Activated T-helper 2 cell treated with anti-CD3 and anti-CD28 coated beads, Interferon-gamma antibody, Interleukin-2, Interleukin-4, amounts not matched to agents 10 μg/mL and 5 μg/mL and 100 μg/mL, durations not matched to agents 14 hours and 24 hours and 36 hours (primary cell): ENCODE measurements at regions of chr1 and their contacts with region 1.

Region 1: GRCh38 chr1:227437495-227438008 is 119.3 kb upstream of the CDC42BPA start:
- DNase-seq: no peak
- H3K4me3 Mint-ChIP-seq: no peak overlapping the region
- H3K27ac Mint-ChIP-seq: no peak overlapping the region
- H3K4me1 Mint-ChIP-seq: peaks cover under 1% of the 10 kb centered on the region
- H3K27me3 Mint-ChIP-seq: peaks cover 17% of the 10 kb centered on the region

Region 2: DNA sequence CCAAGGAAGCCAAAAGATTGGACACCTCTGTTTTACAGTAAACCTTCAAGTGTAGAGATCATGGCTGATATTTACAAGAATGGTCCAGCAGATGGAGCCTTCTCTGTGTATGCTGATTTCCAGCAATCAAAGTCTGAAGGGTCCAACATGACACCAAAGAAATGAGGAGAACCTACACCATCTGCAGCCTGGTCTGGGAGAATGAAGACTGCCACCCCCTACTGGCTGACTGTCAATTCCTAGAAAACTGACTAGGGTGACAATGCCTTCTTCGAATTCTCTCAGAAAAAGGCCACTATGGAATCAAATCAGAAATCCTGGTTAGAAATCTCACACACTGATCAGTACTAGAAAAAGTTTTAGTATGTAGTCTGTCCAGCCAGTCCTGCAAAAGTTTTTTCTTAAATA is 202.6 kb before region 1 on chr1:
- intact Hi-C with region 1: loop called (anchors 5 kb)
- DNase-seq: no peak
- H3K4me3 Mint-ChIP-seq: no peak overlapping the region
- H3K27ac Mint-ChIP-seq: no peak overlapping the region
- H3K4me1 Mint-ChIP-seq: peaks cover 4% of the 10 kb centered on the region
- H3K27me3 Mint-ChIP-seq: peaks cover 6% of the 10 kb centered on the region

Region 3: GRCh38 chr1:227318003-227318852 is 119.3 kb before region 1 on chr1 and contains the start of gene CDC42BPA:
- intact Hi-C with region 1: loop called (anchors 10 kb)
- DNase-seq: peak; percentile 23
- H3K4me3 Mint-ChIP-seq: peak within 1 kb of the TSS; percentile 83
- H3K27ac Mint-ChIP-seq: peak within 1 kb of the TSS; percentile 33
- H3K4me1 Mint-ChIP-seq: peaks cover 24% of the 10 kb centered on the region
- H3K27me3 Mint-ChIP-seq: peaks cover 59% of the 10 kb centered on the region
- total RNA-seq, gene CDC42BPA: 6.6 and 7.1 TPM in 2 replicates

Region 4: GRCh38 chr1:227396539-227397353 is 40.8 kb before region 1 on chr1:
- intact Hi-C with region 1: loop called (anchors 2 kb)
- DNase-seq: no peak
- H3K4me3 Mint-ChIP-seq: no peak overlapping the region
- H3K27ac Mint-ChIP-seq: no peak overlapping the region
- H3K4me1 Mint-ChIP-seq: peaks cover 13% of the 10 kb centered on the region
- H3K27me3 Mint-ChIP-seq: no peaks in the 10 kb centered on the region

Region 5: DNA sequence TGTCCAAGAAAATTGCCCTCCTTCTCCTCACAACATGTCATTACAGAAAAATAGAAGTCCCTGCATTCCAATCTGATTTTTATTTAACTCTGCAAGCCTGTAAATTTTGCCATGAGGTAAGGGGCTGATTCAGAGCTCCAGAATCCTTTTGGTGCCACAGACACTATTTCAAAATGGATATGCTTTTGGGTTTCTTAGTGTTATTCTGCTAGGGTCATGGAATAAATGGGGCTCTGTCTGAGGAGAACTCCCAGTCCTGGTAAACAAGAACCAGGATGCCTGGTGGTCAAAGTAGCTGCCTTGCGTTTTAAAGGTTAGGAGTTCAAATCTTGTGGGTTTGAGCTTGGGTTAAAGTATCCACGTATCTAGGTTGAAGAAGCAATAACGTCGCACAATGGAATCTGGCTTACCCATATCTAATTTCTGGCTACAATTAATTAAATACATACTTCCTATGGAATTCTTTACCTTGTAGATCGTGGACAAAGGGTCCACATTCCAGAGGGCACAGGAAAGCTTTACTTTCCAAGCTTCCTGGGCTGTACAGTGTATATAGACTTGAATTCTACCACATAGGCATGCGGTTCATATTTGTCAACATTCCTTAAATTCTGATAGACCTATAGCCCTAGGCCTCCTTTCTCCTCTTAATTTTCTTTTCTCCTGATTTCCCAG is 21.3 kb before region 1 on chr1:
- intact Hi-C with region 1: no loop called
- DNase-seq: no peak
- H3K4me3 Mint-ChIP-seq: no peak overlapping the region
- H3K27ac Mint-ChIP-seq: no peak overlapping the region
- H3K4me1 Mint-ChIP-seq: peaks cover 6% of the 10 kb centered on the region
- H3K27me3 Mint-ChIP-seq: peaks cover 3% of the 10 kb centered on the region

Region 6: GRCh38 chr1:227459326-227459841 is 21.8 kb after region 1 on chr1:
- intact Hi-C with region 1: no loop called
- DNase-seq: no peak
- H3K4me3 Mint-ChIP-seq: no peak overlapping the region
- H3K27ac Mint-ChIP-seq: no peak overlapping the region
- H3K4me1 Mint-ChIP-seq: no peaks in the 10 kb centered on the region
- H3K27me3 Mint-ChIP-seq: peaks cover 4% of the 10 kb centered on the region